Breast epithelium (tissue), 4 donors: ENCODE measurements at regions of chr20 and their contacts with region 1.

Region 1: DNA sequence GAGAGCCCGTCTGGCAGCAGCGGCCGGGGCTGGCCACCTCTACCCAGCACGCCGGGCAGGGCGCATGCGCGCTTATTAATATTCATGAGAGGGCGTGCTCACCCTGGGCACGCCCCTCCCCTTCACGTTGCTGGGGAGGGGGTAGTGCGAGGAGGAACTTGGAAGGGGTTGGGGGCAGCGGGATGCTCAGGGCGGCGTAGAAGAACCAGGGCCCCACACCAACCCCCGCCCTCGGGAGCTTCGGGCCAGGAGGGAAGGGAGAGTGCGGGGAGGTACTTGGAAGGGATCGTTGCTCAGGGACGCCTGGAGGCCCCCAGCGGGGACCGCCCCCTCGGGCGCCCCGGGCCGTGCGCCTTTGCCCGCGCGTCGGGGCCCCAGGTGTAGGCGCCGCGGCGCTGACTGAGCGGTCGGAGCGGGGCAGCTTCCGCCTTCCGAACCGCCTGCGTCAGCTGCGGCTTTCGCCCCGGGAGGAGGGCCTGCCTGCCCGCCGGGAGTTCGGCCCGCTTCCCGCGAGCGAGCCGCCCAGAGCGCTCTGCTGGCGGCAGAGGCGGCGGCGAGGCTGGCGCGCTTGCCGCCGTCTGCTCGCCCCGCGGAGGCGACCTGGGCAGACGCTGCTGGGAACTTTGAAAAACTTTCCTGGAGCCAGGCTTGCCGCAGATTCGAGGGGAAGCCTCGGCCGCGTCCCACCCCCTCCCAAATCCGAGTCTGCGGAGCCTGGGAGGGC is at the start of gene JAG1:
- DNase-seq: peak; percentile 92 to 93
- H3K4me3 ChIP-seq: peak within 1 kb of the TSS; percentile 86 to 93 (median 87)
- H3K27ac ChIP-seq: peak within 1 kb of the TSS; percentile 96 to 98
- H3K4me1 ChIP-seq: no peaks in the 10 kb centered on the region
- H3K27me3 ChIP-seq: no peaks in the 10 kb centered on the region
- CTCF ChIP-seq: no peak
- POLR2A ChIP-seq: peak; percentile 82
- total RNA-seq, gene JAG1: 49.0 to 97.9 (median 75.7) TPM

Region 2: GRCh38 chr20:9262653-9263194 is 1411.4 kb before region 1 on chr20:
- intact Hi-C with region 1: loop called (anchors 10 kb)
- DNase-seq: no peak
- H3K4me3 ChIP-seq: no peak overlapping the region
- H3K27ac ChIP-seq: no peak overlapping the region
- H3K4me1 ChIP-seq: no peaks in the 10 kb centered on the region
- H3K27me3 ChIP-seq: no peaks in the 10 kb centered on the region
- CTCF ChIP-seq: no peak
- POLR2A ChIP-seq: no peak

Region 3: GRCh38 chr20:10565191-10565921 is 108.8 kb before region 1 on chr20:
- intact Hi-C with region 1: loop called (anchors 10 kb)
- DNase-seq: no peak
- H3K4me3 ChIP-seq: no peak overlapping the region
- H3K27ac ChIP-seq: peak overlapping the region; percentile 67 to 83
- H3K4me1 ChIP-seq: no peaks in the 10 kb centered on the region
- H3K27me3 ChIP-seq: no peaks in the 10 kb centered on the region
- CTCF ChIP-seq: no peak
- POLR2A ChIP-seq: no peak

Region 4: DNA sequence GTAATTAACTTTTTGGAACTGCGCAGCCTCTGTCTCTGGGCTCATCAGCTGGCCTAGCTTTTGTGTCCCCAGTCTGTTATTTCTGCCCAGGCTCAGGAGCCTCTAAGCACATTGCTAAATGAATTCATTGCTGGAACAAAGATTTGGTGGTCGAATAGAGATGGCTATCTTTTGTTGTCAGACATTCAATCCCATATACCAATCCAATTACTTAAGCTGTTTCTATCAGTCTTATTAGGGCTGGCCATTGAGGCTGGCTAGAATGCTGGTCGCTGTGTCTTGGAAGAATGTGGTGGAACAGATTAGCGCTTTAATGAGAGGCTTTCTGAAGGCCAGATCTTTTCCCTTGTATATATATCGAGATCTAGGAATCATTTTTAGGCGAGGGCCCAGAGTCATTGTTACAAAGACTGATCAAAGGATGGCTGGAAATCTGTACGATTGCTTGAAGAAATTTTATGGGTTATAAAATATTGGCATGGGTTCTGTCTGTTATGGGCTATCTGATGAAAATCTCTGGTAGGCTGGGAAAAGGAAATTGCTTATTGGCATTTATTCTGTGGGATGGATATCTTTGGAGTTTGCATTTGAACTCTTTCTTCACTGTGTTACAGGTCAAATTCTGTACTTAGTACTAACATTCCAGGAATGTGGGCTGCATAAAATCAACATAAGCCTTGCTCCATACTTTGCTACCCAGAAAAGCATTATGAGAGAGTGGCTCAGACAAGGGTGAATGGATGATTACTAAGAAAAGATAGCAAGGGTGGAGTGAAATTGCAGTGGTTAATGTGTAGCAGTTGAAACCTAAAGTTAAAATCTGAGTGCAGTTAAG is 34.4 kb after region 1 on chr20:
- intact Hi-C with region 1: no loop called
- DNase-seq: no peak
- H3K4me3 ChIP-seq: no peak overlapping the region
- H3K27ac ChIP-seq: no peak overlapping the region
- H3K4me1 ChIP-seq: no peaks in the 10 kb centered on the region
- H3K27me3 ChIP-seq: no peaks in the 10 kb centered on the region
- CTCF ChIP-seq: no peak
- POLR2A ChIP-seq: no peak